CD4-positive, alpha-beta memory T cell (primary cell): ENCODE measurements at regions of chr4 and their contacts with region 1.

Region 1: DNA sequence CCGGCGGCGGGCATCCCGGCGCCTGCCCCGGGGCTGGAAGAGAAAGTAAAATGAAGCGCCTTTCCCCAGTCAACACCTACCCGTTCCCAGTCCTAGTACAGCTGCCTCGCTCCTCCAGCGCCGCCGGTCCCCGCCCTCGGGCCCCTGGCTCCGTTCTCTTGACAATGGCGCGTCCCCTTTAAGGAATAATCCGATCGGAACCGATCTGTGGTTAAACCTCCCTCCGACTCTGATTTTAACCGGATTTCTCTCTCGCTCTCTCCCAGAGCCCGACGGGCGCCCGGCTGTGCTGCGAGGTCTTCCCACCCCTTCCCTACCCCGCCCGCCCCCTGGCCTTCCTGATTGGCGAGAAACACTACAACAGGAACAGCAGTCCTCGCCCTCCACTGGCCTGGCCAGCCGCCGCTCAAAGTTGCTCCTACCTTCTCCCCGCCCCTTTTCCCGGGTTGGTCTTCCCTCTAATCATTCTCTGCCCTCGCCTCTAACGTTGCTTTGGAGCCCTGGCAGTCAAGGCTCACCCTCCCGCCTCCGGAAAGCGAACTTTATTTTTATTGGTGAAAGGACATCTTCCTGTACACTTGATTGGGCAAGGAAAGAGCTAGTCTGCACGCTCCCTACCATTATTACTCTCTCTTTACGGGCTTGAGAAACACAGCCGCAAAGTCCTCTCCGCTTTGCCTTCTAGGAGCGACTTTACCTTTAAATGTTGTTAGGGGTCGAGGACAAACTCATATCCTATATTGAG is at the start of gene FRYL:
- DNase-seq: peak; percentile 98 to 99 (median 99)
- H3K4me3 ChIP-seq: peak within 1 kb of the TSS; percentile 89 to 96
- H3K4me3 Mint-ChIP-seq: peak within 1 kb of the TSS; percentile 90 to 98 (median 94)
- H3K27ac ChIP-seq: peak within 1 kb of the TSS; percentile 78
- H3K27ac Mint-ChIP-seq: peak within 1 kb of the TSS; percentile 83 to 98 (median 93)
- H3K4me1 ChIP-seq: peaks cover 45% of the 10 kb centered on the region
- H3K4me1 Mint-ChIP-seq: peaks cover 27 to 54% (median 40%) of the 10 kb centered on the region in 4 donors
- H3K27me3 ChIP-seq: no peaks in the 10 kb centered on the region
- H3K27me3 Mint-ChIP-seq: no peaks in the 10 kb centered on the region
- total RNA-seq, gene FRYL: 124 to 134 TPM

Region 2: DNA sequence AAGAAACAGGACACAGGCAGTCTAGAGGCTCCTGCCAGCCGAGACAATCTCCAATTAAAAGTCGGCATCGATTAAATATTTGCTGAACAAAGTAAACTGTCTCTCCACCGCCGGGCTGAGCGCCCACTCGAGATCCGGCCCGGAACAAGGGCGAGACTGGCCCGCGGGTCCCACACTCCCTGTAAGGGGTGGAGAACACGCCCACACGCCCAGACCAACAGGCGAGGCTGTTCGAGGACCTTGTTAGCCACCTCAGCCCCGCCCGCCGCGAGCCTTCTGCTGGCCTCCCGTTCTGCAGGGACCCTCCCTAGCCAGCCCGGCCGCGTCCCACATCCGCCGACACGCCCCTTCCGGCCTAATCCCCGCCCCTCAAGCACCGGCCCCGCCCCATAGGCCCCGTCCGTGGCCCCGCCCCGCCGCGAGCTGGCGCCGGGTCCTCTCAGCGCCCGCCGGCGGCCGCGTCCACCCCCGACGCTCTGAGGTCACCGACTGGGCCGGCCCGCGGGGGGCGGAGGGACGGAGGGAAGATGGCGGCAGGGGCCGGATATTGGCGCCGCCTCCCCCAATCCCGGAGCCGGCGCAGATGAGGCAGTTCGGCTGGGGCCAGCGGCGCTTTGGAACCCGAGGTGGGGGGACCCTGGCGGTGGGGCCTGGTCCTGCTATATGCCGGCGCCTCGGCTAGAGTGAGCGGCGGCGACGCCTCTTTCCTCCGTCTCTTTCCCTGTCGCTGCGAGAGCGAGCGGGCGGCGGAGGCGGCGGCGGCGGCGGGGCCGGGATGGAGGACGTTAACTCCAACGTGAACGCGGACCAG is 439.0 kb before region 1 on chr4 and contains the start of gene SLAIN2:
- CTCF ChIA-PET with region 1: no interaction called
- POLR2A ChIA-PET with region 1: interaction called, 14 read pairs
- intact Hi-C with region 1: loop called (anchors 1 kb)
- DNase-seq: peak; percentile 95 to 100 (median 97)
- H3K4me3 ChIP-seq: peak within 1 kb of the TSS; percentile 68 to 90
- H3K4me3 Mint-ChIP-seq: peak within 1 kb of the TSS; percentile 96 to 98 (median 97)
- H3K27ac ChIP-seq: peak within 1 kb of the TSS; percentile 89
- H3K27ac Mint-ChIP-seq: peak within 1 kb of the TSS; percentile 97 to 100 (median 98)
- H3K4me1 ChIP-seq: peaks cover 52% of the 10 kb centered on the region
- H3K4me1 Mint-ChIP-seq: peaks cover 33 to 58% (median 42%) of the 10 kb centered on the region in 4 donors
- H3K27me3 ChIP-seq: no peaks in the 10 kb centered on the region
- H3K27me3 Mint-ChIP-seq: no peaks in the 10 kb centered on the region
- total RNA-seq, gene SLAIN2: 84.4 to 87.5 TPM

Region 3: GRCh38 chr4:48681856-48682255 is 98.3 kb before region 1 on chr4:
- CTCF ChIA-PET with region 1: no interaction called
- POLR2A ChIA-PET with region 1: no interaction called
- intact Hi-C with region 1: loop called (anchors 5 kb)
- DNase-seq: peak; percentile 26 to 45 (median 31)
- H3K4me3 ChIP-seq: no peak overlapping the region
- H3K4me3 Mint-ChIP-seq: peak overlapping the region in 1 of 8 donors; percentile 41
- H3K27ac ChIP-seq: no peak overlapping the region
- H3K27ac Mint-ChIP-seq: peak overlapping the region in 5 of 7 donors; percentile 19 to 78 (median 64)
- H3K4me1 ChIP-seq: peaks cover 22% of the 10 kb centered on the region
- H3K4me1 Mint-ChIP-seq: peaks cover 34 to 49% (median 38%) of the 10 kb centered on the region in 4 donors
- H3K27me3 ChIP-seq: no peaks in the 10 kb centered on the region
- H3K27me3 Mint-ChIP-seq: no peaks in the 10 kb centered on the region

Region 4: GRCh38 chr4:48727666-48728459 is 52.3 kb before region 1 on chr4:
- CTCF ChIA-PET with region 1: interaction called, 5 read pairs
- POLR2A ChIA-PET with region 1: interaction called, 26 read pairs
- intact Hi-C with region 1: loop called (anchors 2 kb)
- DNase-seq: no peak
- H3K4me3 ChIP-seq: no peak overlapping the region
- H3K4me3 Mint-ChIP-seq: peak overlapping the region in 7 of 8 donors; percentile 3 to 83 (median 72)
- H3K27ac ChIP-seq: no peak overlapping the region
- H3K27ac Mint-ChIP-seq: peak overlapping the region in 6 of 7 donors; percentile 45 to 92 (median 82)
- H3K4me1 ChIP-seq: peaks cover 56% of the 10 kb centered on the region
- H3K4me1 Mint-ChIP-seq: peaks cover 76 to 96% (median 87%) of the 10 kb centered on the region in 4 donors
- H3K27me3 ChIP-seq: no peaks in the 10 kb centered on the region
- H3K27me3 Mint-ChIP-seq: no peaks in the 10 kb centered on the region

Region 5: DNA sequence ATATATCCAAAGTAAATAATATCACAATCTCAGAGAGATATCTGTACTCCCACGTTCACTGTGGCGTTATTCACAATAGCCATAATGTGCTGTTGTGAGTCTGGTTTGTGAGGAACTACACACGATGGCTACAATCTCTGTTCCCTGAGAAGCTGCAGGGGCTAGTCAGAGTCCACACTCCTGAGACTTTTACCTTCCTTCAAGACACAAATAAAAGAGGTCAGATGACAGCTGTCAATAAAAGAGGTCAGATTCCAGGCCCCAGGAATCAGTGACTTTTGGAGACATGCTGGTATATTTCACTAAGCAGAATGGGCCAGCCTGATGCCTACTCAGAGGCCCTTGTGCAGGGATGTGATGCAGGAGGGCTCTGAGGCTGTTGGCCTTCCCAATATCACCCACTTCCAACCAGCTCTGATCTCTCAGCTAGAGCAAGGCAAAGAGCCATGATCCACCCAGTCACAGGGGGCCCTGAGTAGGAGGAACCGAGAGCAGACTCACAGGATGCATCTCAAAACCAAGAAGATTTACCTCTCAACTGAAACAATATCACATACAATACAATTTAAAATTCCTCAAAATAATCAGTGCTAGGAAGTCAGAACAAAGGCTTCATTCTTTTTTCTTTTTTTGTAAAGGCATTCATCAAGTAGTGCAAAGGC is 13.9 kb before region 1 on chr4:
- CTCF ChIA-PET with region 1: interaction called, 4 read pairs
- POLR2A ChIA-PET with region 1: interaction called, 16 read pairs
- intact Hi-C with region 1: loop called (anchors 1 kb)
- DNase-seq: no peak
- H3K4me3 ChIP-seq: no peak overlapping the region
- H3K4me3 Mint-ChIP-seq: peak overlapping the region in 5 of 8 donors; percentile 5 to 71 (median 36)
- H3K27ac ChIP-seq: no peak overlapping the region
- H3K27ac Mint-ChIP-seq: peak overlapping the region in 1 of 7 donors; percentile 64
- H3K4me1 ChIP-seq: peaks cover 58% of the 10 kb centered on the region
- H3K4me1 Mint-ChIP-seq: peaks cover 44 to 69% (median 55%) of the 10 kb centered on the region in 4 donors
- H3K27me3 ChIP-seq: no peaks in the 10 kb centered on the region
- H3K27me3 Mint-ChIP-seq: no peaks in the 10 kb centered on the region

Region 6: GRCh38 chr4:48906206-48907173 is 126.3 kb after region 1 on chr4 and contains the start of gene OCIAD2:
- CTCF ChIA-PET with region 1: interaction called, 6 read pairs
- POLR2A ChIA-PET with region 1: interaction called, 23 read pairs
- intact Hi-C with region 1: loop called (anchors 1 kb)
- DNase-seq: peak; percentile 80 to 89 (median 82)
- H3K4me3 ChIP-seq: peak within 1 kb of the TSS; percentile 70 to 77
- H3K4me3 Mint-ChIP-seq: peak within 1 kb of the TSS; percentile 92 to 98 (median 93)
- H3K27ac ChIP-seq: peak within 1 kb of the TSS; percentile 59
- H3K27ac Mint-ChIP-seq: peak within 1 kb of the TSS; percentile 83 to 97 (median 94)
- H3K4me1 ChIP-seq: peaks cover 39% of the 10 kb centered on the region
- H3K4me1 Mint-ChIP-seq: peaks cover 31 to 55% (median 38%) of the 10 kb centered on the region in 4 donors
- H3K27me3 ChIP-seq: no peaks in the 10 kb centered on the region
- H3K27me3 Mint-ChIP-seq: no peaks in the 10 kb centered on the region
- total RNA-seq, gene OCIAD2: 102 to 108 TPM